ENCODE measurements at regions of chrX and their contacts with region 1.

Region 1: GRCh38 chrX:12447448-12448064 is 309.3 kb downstream of the FRMPD4 start:
- DNase-seq: peak; percentile 91
- H3K4me3 ChIP-seq: no peak overlapping the region
- H3K27ac ChIP-seq: peak overlapping the region; percentile 84
- H3K4me1 ChIP-seq: peaks cover 17% of the 10 kb centered on the region
- H3K27me3 ChIP-seq: no peaks in the 10 kb centered on the region
- CTCF ChIP-seq: peak; percentile 9 to 46

Region 2: GRCh38 chrX:11944501-11944900 is 503.1 kb before region 1 on chrX:
- CTCF ChIA-PET with region 1: no interaction called
- dilution Hi-C with region 1: no loop called
- in situ Hi-C with region 1: no loop called
- intact Hi-C with region 1: loop called (anchors 10 kb)
- DNase-seq: peak; percentile 67
- H3K4me3 ChIP-seq: no peak overlapping the region
- H3K27ac ChIP-seq: no peak overlapping the region
- H3K4me1 ChIP-seq: peaks cover 6% of the 10 kb centered on the region
- H3K27me3 ChIP-seq: no peaks in the 10 kb centered on the region
- CTCF ChIP-seq: peak; percentile 64 to 68

Region 3: GRCh38 chrX:11998944-11999343 is 448.6 kb before region 1 on chrX:
- CTCF ChIA-PET with region 1: no interaction called
- dilution Hi-C with region 1: no loop called
- in situ Hi-C with region 1: no loop called
- intact Hi-C with region 1: no loop called
- DNase-seq: no peak
- H3K4me3 ChIP-seq: no peak overlapping the region
- H3K27ac ChIP-seq: no peak overlapping the region
- H3K4me1 ChIP-seq: peaks cover 8% of the 10 kb centered on the region
- H3K27me3 ChIP-seq: no peaks in the 10 kb centered on the region
- CTCF ChIP-seq: no peak

Region 4: GRCh38 chrX:12223650-12224049 is 223.9 kb before region 1 on chrX:
- CTCF ChIA-PET with region 1: no interaction called
- dilution Hi-C with region 1: no loop called
- in situ Hi-C with region 1: no loop called
- intact Hi-C with region 1: loop called (anchors 5 kb)
- DNase-seq: peak; percentile 87
- H3K4me3 ChIP-seq: no peak overlapping the region
- H3K27ac ChIP-seq: no peak overlapping the region
- H3K4me1 ChIP-seq: peaks cover 5% of the 10 kb centered on the region
- H3K27me3 ChIP-seq: no peaks in the 10 kb centered on the region
- CTCF ChIP-seq: no peak

Region 5: GRCh38 chrX:12419591-12419990 is 28.0 kb before region 1 on chrX:
- CTCF ChIA-PET with region 1: no interaction called
- dilution Hi-C with region 1: no loop called
- in situ Hi-C with region 1: no loop called
- intact Hi-C with region 1: loop called (anchors 2 kb)
- DNase-seq: peak; percentile 53
- H3K4me3 ChIP-seq: no peak overlapping the region
- H3K27ac ChIP-seq: peak overlapping the region; percentile 59
- H3K4me1 ChIP-seq: peaks cover 28% of the 10 kb centered on the region
- H3K27me3 ChIP-seq: no peaks in the 10 kb centered on the region
- CTCF ChIP-seq: no peak

Region 6: GRCh38 chrX:12567857-12568256 is 120.3 kb after region 1 on chrX:
- CTCF ChIA-PET with region 1: no interaction called
- dilution Hi-C with region 1: no loop called
- in situ Hi-C with region 1: no loop called
- intact Hi-C with region 1: loop called (anchors 5 kb)
- DNase-seq: no peak
- H3K4me3 ChIP-seq: no peak overlapping the region
- H3K27ac ChIP-seq: no peak overlapping the region
- H3K4me1 ChIP-seq: peaks cover 5% of the 10 kb centered on the region
- H3K27me3 ChIP-seq: no peaks in the 10 kb centered on the region
- CTCF ChIP-seq: peak; percentile 77 to 89

Measured in mammary epithelial cell (primary cell).